Left ventricle myocardium inferior (tissue), 1 donor: ENCODE measurements at regions of chr12 and their contacts with region 1.

Region 1: DNA sequence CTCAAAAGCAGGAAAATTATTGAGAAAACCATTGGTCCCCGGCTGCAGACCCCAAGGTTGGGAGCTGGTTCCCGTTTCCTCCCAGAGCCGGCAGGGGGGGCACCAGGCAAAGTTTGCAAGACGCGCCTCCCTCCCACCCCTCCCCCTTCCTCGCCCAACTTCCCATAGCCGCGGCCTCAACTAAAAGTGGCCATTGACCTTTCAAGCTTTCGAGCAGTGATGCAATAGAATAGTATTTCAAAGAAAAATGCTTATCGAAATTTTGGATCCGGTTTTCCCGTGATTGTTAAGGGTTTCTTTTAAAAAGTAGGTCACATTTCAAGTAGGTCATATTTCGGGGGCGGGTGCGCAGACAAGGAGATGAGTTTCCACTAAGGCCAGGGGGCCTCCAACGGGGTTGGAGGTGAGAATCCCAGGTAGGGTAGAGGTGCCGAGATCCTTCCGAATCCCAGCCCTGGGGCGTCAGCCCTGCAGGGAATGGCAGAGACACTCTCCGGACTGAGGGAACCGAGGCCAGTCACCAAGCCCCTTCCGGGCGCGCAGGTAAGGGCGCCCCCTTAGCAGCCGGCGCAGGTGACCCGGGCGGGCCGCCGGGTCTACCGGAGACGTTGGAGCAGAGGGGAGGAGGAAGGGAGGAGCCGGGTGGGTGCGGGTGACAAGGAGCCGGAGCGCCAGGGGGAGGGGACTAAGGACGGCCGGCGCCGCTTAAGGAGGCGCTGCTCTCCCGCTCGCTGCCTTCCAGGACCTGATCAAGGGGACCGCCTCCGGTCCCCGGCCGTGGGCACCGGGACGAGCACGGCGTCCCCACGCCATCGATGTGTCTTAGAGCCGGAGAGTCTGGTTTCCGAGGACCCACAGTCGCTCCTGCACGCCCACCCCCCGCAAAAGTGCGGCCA is 2.6 kb upstream of the SOCS2 start:
- DNase-seq: peak; percentile 89
- H3K4me3 ChIP-seq: peak overlapping the region; percentile 87
- H3K27ac ChIP-seq: peak overlapping the region; percentile 97
- H3K4me1 ChIP-seq: peaks cover 50% of the 10 kb centered on the region
- H3K27me3 ChIP-seq: no peaks in the 10 kb centered on the region
- CTCF ChIP-seq: peak; percentile 91

Region 2: GRCh38 chr12:93079271-93079670 is 490.6 kb before region 1 on chr12:
- intact Hi-C with region 1: no loop called
- DNase-seq: no peak
- H3K4me3 ChIP-seq: no peak overlapping the region
- H3K27ac ChIP-seq: no peak overlapping the region
- H3K4me1 ChIP-seq: peaks cover 8% of the 10 kb centered on the region
- H3K27me3 ChIP-seq: no peaks in the 10 kb centered on the region
- CTCF ChIP-seq: no peak

Region 3: GRCh38 chr12:93591137-93591868 is 21.4 kb after region 1 on chr12:
- intact Hi-C with region 1: loop called (anchors 2 kb)
- DNase-seq: peak; percentile 78
- H3K4me3 ChIP-seq: peak overlapping the region; percentile 71
- H3K27ac ChIP-seq: peak overlapping the region; percentile 90
- H3K4me1 ChIP-seq: peaks cover 30% of the 10 kb centered on the region
- H3K27me3 ChIP-seq: no peaks in the 10 kb centered on the region
- CTCF ChIP-seq: no peak

Region 4: DNA sequence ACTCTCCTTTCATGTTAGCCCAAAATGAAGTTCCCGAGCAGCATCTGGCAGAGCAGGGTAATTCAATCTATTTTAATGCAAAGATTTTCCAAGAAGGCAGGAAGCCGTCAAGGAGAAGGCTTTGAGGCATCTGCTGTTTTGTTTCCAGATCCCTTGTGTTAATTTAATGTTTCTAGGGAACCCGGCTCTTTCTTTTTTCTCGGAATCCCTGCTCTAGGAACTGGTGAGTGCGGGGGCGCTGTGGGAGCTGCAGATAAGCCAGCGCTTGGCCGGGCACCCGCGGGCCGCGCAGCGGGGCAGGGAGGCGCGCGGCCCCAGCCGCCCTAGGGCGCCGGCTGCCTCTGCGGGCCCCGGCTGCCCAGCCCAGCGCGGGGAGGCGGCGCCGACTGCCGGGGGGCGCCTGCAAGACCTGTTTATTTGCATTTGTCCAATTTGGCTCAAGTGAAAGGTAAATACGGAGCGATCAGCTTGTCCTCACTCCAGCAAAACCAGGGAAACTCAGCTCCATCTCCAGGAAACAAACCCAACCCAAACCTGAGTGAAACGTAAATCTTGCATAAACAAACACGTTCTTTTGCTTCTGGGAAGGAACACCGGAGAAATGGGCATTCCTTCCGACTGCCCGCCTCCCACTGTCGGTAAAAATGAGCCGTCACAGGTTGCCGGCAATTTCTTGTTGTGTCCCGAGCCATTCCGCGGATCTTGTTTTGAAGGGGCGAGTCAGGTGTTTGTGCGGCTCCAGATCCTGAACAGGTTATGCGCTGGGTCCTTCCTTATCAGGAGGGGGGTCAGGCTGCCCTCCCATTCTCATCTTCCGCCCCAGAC is 172.4 kb after region 1 on chr12:
- intact Hi-C with region 1: loop called (anchors 5 kb)
- DNase-seq: peak; percentile 75
- H3K4me3 ChIP-seq: peak overlapping the region; percentile 71
- H3K27ac ChIP-seq: peak overlapping the region; percentile 93
- H3K4me1 ChIP-seq: peaks cover 84% of the 10 kb centered on the region
- H3K27me3 ChIP-seq: no peaks in the 10 kb centered on the region
- CTCF ChIP-seq: peak; percentile 45

Region 5: GRCh38 chr12:94101738-94102660 is 532.1 kb after region 1 on chr12:
- intact Hi-C with region 1: loop called (anchors 5 kb)
- DNase-seq: peak; percentile 84
- H3K4me3 ChIP-seq: peak overlapping the region; percentile 75
- H3K27ac ChIP-seq: peak overlapping the region; percentile 63
- H3K4me1 ChIP-seq: peaks cover 15% of the 10 kb centered on the region
- H3K27me3 ChIP-seq: peaks cover 22% of the 10 kb centered on the region
- CTCF ChIP-seq: peak; percentile 88